H1 (cell line): ENCODE measurements at regions of chr11 and their contacts with region 1.

Region 1: GRCh38 chr11:11036848-11037732 is 179.2 kb upstream of the ZBED5 start:
- DNase-seq: peak in 1 of 2 experiments; percentile 9
- H3K4me3 ChIP-seq: no peak overlapping the region
- H3K27ac ChIP-seq: no peak overlapping the region
- H3K4me1 ChIP-seq: peaks cover 0 to 3% (median 1%) of the 10 kb centered on the region in 4 experiments; a peak in 3 of 7 replicates
- H3K27me3 ChIP-seq: no peaks in the 10 kb centered on the region
- CTCF ChIP-seq: peak; percentile 49 to 85 (median 74)
- EP300 ChIP-seq: no peak
- POLR2A ChIP-seq: no peak
- RAD21 ChIP-seq: peak; percentile 90 to 92

Region 2: DNA sequence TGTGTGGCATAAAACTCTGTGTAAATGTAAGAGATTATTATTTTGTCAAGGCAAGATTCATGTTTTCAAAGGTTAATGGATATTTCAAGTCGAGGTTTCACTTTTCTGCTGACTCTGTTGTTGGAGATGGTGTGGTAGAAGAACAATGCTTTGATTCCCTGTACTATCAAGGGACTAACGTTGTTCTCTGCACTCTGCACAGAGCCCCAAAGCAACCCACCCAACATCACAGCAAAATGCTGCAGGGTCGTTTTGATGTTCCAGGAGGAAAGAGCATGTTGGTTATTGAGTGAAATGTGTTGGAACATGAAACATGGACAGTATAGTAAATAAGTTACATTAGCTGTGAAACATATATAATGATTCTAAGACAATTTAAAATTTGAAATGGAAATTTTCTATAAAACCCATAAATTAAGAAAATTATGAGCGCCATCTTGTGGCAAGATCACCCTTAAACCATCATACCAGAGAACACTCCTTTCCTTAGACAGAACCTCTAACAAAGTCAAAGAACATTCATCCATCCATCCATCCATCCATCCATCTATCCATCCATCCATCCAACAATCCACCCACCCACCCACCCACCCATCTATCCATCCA is 14.9 kb before region 1 on chr11:
- CTCF ChIA-PET with region 1: interaction called, 46 read pairs
- POLR2A ChIA-PET with region 1: no interaction called
- DNase-seq: no peak
- H3K4me3 ChIP-seq: no peak overlapping the region
- H3K27ac ChIP-seq: no peak overlapping the region
- H3K4me1 ChIP-seq: peaks cover 0 to 4% (median 2%) of the 10 kb centered on the region in 4 experiments; a peak in 5 of 7 replicates
- H3K27me3 ChIP-seq: peaks cover 0 to 3% (median 0%) of the 10 kb centered on the region in 4 experiments; a peak in 1 of 7 replicates
- CTCF ChIP-seq: peak in 2 of 3 experiments; percentile 20 to 29; a peak in 2 of 4 replicates
- EP300 ChIP-seq: no peak
- POLR2A ChIP-seq: no peak
- RAD21 ChIP-seq: peak in 1 of 2 experiments; percentile 39; a peak in 3 of 4 replicates

Region 3: GRCh38 chr11:11078344-11079086 is 41.4 kb after region 1 on chr11:
- CTCF ChIA-PET with region 1: interaction called, 60 read pairs
- POLR2A ChIA-PET with region 1: interaction called, 4 read pairs
- DNase-seq: no peak
- H3K4me3 ChIP-seq: no peak overlapping the region
- H3K27ac ChIP-seq: no peak overlapping the region
- H3K4me1 ChIP-seq: peaks cover 0 to 11% (median 8%) of the 10 kb centered on the region in 4 experiments; a peak in 6 of 7 replicates
- H3K27me3 ChIP-seq: no peaks in the 10 kb centered on the region; a peak in 1 of 7 replicates
- CTCF ChIP-seq: peak in 2 of 3 experiments; percentile 12 to 21; a peak in 1 of 4 replicates
- EP300 ChIP-seq: no peak
- POLR2A ChIP-seq: no peak
- RAD21 ChIP-seq: peak; percentile 45 to 51

Region 4: DNA sequence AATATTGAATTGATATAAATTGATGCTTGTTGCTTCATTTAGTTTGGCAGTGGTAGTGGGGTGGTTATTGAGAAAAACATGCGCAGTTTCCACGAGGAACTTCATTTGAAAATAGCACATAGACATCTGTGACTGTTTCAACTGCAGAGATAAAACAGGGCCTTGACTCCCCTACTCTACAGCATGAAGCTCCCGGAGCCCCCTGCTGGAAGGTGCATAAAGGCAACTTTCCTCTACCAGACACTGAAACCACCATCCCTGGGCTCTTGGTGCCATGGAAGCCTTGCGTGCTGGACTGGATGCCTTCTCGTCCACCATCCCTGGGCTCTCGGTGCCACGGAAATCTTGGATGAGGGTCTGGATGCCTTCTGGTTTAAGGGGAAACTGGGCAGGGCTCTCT is 120.1 kb after region 1 on chr11:
- CTCF ChIA-PET with region 1: interaction called, 68 read pairs
- POLR2A ChIA-PET with region 1: no interaction called
- DNase-seq: no peak
- H3K4me3 ChIP-seq: no peak overlapping the region
- H3K27ac ChIP-seq: no peak overlapping the region
- H3K4me1 ChIP-seq: peaks cover 0 to 2% (median 0%) of the 10 kb centered on the region in 4 experiments; a peak in 2 of 7 replicates
- H3K27me3 ChIP-seq: no peaks in the 10 kb centered on the region
- CTCF ChIP-seq: peak; percentile 51 to 64 (median 60)
- EP300 ChIP-seq: no peak
- POLR2A ChIP-seq: no peak
- RAD21 ChIP-seq: peak; percentile 45 to 56

Region 5: GRCh38 chr11:11243590-11244469 is 206.7 kb after region 1 on chr11:
- CTCF ChIA-PET with region 1: interaction called, 14 read pairs
- POLR2A ChIA-PET with region 1: no interaction called
- DNase-seq: peak in 1 of 2 experiments; percentile 67
- H3K4me3 ChIP-seq: no peak overlapping the region
- H3K27ac ChIP-seq: peak overlapping the region; percentile 9; the same call in 1 of the 2 replicates
- H3K4me1 ChIP-seq: peaks cover 2 to 5% (median 3%) of the 10 kb centered on the region in 4 experiments; a peak in 5 of 7 replicates
- H3K27me3 ChIP-seq: no peaks in the 10 kb centered on the region; a peak in 1 of 7 replicates
- CTCF ChIP-seq: no peak
- EP300 ChIP-seq: 0 out of 3 replicates have a peak, but pooled peaks of 1 of the 2 experiments have one; percentile 31
- POLR2A ChIP-seq: no peak
- RAD21 ChIP-seq: no peak

Region 6: DNA sequence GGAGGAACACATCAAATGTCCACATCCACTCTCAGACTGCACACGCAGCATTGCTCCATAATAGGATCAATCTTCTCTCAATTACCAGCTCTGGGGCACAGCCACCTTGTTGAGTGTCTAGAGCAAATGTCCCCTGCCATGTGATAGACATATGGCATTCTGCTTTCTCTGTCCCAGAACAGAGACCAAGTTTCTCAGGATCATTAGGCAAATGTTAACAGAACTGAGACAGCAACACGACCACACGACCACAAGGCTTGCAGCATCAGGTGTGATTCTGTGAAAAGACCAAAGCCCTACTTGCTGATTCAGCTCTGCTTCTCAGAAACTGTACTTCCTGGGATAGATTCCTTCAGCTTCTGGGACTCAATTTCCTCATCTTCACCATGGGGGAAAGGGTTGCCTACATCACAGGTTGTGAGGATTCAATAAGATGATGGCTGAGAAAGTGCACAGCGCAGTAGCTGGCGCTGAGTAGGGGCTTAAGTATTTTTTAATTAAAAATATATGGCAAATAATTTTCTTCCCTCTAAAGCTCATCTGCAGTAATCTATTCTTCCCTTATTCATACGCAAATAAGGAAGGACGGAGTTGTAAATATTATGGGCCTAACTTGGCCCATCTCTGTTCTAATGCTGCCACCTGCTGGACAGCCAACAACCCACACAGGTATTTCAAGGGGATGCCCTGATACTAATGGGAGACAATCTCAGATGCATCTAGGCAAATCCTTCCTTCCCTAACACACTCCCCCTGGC is 750.4 kb after region 1 on chr11:
- CTCF ChIA-PET with region 1: interaction called, 19 read pairs
- POLR2A ChIA-PET with region 1: no interaction called
- DNase-seq: peak in 1 of 2 experiments; percentile 82
- H3K4me3 ChIP-seq: no peak overlapping the region
- H3K27ac ChIP-seq: no peak overlapping the region
- H3K4me1 ChIP-seq: peaks cover 0 to 8% (median 6%) of the 10 kb centered on the region in 4 experiments; a peak in 4 of 7 replicates
- H3K27me3 ChIP-seq: no peaks in the 10 kb centered on the region
- CTCF ChIP-seq: peak; percentile 53 to 83 (median 81)
- EP300 ChIP-seq: no peak
- POLR2A ChIP-seq: no peak
- RAD21 ChIP-seq: peak; percentile 98